ENCODE measurements at regions of chr3 and their contacts with region 1.

Region 1: GRCh38 chr3:122514123-122515019 is at the start of gene KPNA1:
- DNase-seq: peak; percentile 70 to 95 (median 82)
- ATAC-seq: peak; percentile 85
- H3K4me3 ChIP-seq: peak within 1 kb of the TSS; percentile 68
- H3K4me3 Mint-ChIP-seq: peak within 1 kb of the TSS; percentile 89
- H3K27ac ChIP-seq: peak within 1 kb of the TSS; percentile 83 to 97
- H3K27ac Mint-ChIP-seq: peak within 1 kb of the TSS; percentile 82
- H3K4me1 ChIP-seq: peaks cover 17% of the 10 kb centered on the region
- H3K4me1 Mint-ChIP-seq: peaks cover 44% of the 10 kb centered on the region
- H3K27me3 ChIP-seq: no peaks in the 10 kb centered on the region
- H3K27me3 Mint-ChIP-seq: no peaks in the 10 kb centered on the region
- CTCF ChIP-seq: no peak
- total RNA-seq, gene KPNA1: 46.2 to 49.8 TPM

Region 2: GRCh38 chr3:122458992-122459391 is 55.4 kb before region 1 on chr3:
- CTCF ChIA-PET with region 1: interaction called, 9 read pairs
- POLR2A ChIA-PET with region 1: interaction called, 4 read pairs
- intact Hi-C with region 1: loop called in 1 of 2 experiments (anchors 5 kb)
- DNase-seq: peak in 3 of 14 experiments; percentile 11 to 17 (median 15)
- ATAC-seq: no peak
- H3K4me3 ChIP-seq: no peak overlapping the region
- H3K4me3 Mint-ChIP-seq: no peak overlapping the region
- H3K27ac ChIP-seq: no peak overlapping the region
- H3K27ac Mint-ChIP-seq: peak overlapping the region; percentile 60
- H3K4me1 ChIP-seq: no peaks in the 10 kb centered on the region
- H3K4me1 Mint-ChIP-seq: no peaks in the 10 kb centered on the region
- H3K27me3 ChIP-seq: no peaks in the 10 kb centered on the region
- H3K27me3 Mint-ChIP-seq: no peaks in the 10 kb centered on the region
- CTCF ChIP-seq: no peak